HCT116 (cell line): ENCODE measurements at regions of chr1 and their contacts with region 1.

Region 1: GRCh38 chr1:160193091-160193819 is 2.9 kb downstream of the CASQ1 start:
- DNase-seq: peak; percentile 68
- ATAC-seq: peak; percentile 94
- H3K4me3 ChIP-seq: no peak overlapping the region
- H3K27ac ChIP-seq: no peak overlapping the region
- H3K4me1 ChIP-seq: peaks cover 3 to 4% of the 10 kb centered on the region in 2 experiments; a peak in 2 of 4 replicates
- H3K27me3 ChIP-seq: no peaks in the 10 kb centered on the region
- CTCF ChIP-seq: peak; percentile 92 to 97 (median 96)
- POLR2A ChIP-seq: no peak
- RAD21 ChIP-seq: peak; percentile 96

Region 2: DNA sequence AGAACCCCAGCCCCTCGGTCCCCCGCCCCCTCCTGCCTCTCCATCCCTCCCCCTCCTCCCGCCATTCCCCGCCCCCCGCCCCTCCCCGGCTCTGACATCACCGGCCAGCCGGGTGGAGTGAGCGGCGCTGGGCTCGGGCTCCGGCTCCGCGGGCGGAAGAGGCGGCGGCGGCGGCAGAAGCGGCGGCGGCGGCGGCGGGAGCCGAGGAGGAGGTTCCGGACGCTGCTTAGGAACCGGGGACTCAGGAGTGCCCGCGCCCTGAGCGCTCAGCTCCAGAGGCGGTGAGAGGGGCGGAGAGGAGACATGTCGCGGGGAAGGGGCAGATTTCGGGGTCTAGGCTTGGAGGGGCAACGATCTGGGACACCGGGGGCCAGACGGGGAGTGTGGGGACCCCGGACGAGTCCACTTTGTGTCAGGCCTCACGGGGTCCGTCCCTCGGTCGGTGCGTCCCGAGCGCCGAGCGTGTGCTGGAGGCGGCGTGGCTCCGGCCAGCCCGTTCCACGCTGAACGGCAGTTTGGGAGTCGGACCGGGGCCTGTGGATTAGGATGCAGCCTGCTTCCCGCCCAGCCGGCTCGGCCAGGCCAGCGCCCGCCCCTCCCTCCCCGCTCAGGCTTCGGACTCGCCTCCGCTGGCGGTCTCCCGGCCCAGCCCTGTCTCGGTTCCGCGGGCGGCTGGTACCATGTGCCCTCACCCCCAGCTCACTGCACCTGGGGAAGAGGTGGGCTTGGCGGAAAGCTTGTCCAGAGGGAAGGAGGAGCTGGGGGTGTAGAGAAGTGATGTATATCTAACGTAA is 12.2 kb after region 1 on chr1 and contains the start of gene PEA15:
- CTCF ChIA-PET with region 1: interaction called, 17 read pairs
- POLR2A ChIA-PET with region 1: interaction called, 3 read pairs
- RAD21 ChIA-PET with region 1: no interaction called
- intact Hi-C with region 1: no loop called
- DNase-seq: peak; percentile 12
- ATAC-seq: peak; percentile 80
- H3K4me3 ChIP-seq: peak within 1 kb of the TSS; percentile 78 to 89
- H3K27ac ChIP-seq: peak within 1 kb of the TSS; percentile 78
- H3K4me1 ChIP-seq: peaks cover 12 to 20% of the 10 kb centered on the region in 2 experiments; a peak in 3 of 4 replicates
- H3K27me3 ChIP-seq: no peaks in the 10 kb centered on the region
- CTCF ChIP-seq: no peak
- POLR2A ChIP-seq: peak; percentile 24
- RAD21 ChIP-seq: no peak
- total RNA-seq, gene PEA15: 44.0 TPM

Region 3: GRCh38 chr1:160244209-160244608 is 51.0 kb after region 1 on chr1:
- CTCF ChIA-PET with region 1: interaction called, 11 read pairs
- POLR2A ChIA-PET with region 1: no interaction called
- RAD21 ChIA-PET with region 1: interaction called in 1 of 2 experiments, 3 read pairs
- intact Hi-C with region 1: no loop called
- DNase-seq: no peak
- ATAC-seq: no peak
- H3K4me3 ChIP-seq: no peak overlapping the region
- H3K27ac ChIP-seq: no peak overlapping the region
- H3K4me1 ChIP-seq: no peaks in the 10 kb centered on the region
- H3K27me3 ChIP-seq: no peaks in the 10 kb centered on the region
- CTCF ChIP-seq: no peak
- POLR2A ChIP-seq: no peak
- RAD21 ChIP-seq: no peak

Region 4: DNA sequence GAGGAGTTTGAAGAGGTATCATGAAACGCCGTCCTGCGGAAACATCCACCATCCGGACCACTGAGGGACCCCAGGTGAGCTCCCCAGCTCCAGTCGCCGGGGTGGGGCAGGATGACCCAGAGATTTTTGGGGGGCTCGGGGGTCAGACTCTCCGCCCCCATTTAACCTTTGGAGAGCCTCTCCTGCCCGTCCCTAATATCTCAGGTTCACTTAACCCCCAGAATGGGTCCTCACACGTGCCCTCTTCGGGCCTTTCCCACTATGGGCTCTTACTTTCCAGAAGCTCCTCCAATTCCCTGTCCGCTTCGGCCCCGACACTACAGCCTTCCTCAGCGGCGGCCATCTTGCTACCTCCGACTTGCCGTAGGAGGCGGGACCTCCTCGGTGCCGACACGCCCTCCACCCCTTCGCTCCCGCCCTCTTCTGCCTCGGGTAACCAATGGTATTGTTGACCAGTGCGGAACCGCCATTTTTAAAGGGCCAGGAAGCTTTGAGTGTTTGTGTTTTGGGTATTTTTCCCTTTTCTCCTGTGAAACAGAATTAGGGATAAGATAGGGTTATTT is 91.6 kb after region 1 on chr1 and contains the start of gene PEX19:
- CTCF ChIA-PET with region 1: interaction called, 17 read pairs
- POLR2A ChIA-PET with region 1: no interaction called
- RAD21 ChIA-PET with region 1: no interaction called
- intact Hi-C with region 1: no loop called
- DNase-seq: peak; percentile 84
- ATAC-seq: peak; percentile 97
- H3K4me3 ChIP-seq: peak within 1 kb of the TSS; percentile 91 to 99
- H3K27ac ChIP-seq: peak within 1 kb of the TSS; percentile 68
- H3K4me1 ChIP-seq: peaks cover 6 to 13% of the 10 kb centered on the region in 2 experiments; a peak in 3 of 4 replicates
- H3K27me3 ChIP-seq: no peaks in the 10 kb centered on the region
- CTCF ChIP-seq: no peak
- POLR2A ChIP-seq: peak; percentile 82
- RAD21 ChIP-seq: no peak
- total RNA-seq, gene PEX19: 35.9 TPM

Region 5: DNA sequence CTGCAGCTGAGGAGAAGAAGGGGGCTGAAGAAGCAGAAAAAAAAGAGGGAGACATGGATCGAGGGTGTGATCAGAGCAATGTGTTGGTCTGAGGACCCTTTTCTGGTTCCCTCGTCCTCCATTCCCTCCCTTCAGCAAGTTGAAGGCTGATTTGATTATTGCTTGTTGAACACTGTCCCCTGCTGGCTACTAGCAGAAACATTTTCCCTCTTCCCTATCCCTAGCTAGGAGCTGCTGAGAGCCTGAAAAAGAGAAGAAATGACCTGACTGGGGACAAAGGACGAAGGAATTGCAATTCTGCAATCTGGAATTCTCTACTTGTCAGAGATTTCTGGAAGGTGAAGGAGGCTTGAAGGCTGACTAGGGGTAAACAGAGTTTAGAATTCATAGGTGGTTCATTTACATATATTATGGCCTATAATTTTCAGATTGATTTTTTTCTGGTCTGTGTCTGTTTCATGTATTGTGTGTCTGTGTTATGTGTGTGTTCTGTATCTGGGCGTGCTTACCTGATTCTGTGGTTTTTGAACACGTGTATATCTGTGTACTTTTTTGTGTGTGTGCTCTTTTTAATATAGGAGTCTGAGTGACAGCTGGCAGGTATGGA is 183.4 kb after region 1 on chr1:
- CTCF ChIA-PET with region 1: interaction called, 26 read pairs
- POLR2A ChIA-PET with region 1: no interaction called
- RAD21 ChIA-PET with region 1: interaction called, 5 to 8 read pairs
- intact Hi-C with region 1: loop called (anchors 5 kb)
- DNase-seq: peak; percentile 61
- ATAC-seq: peak; percentile 92
- H3K4me3 ChIP-seq: no peak overlapping the region
- H3K27ac ChIP-seq: no peak overlapping the region
- H3K4me1 ChIP-seq: peaks cover 0 to 8% of the 10 kb centered on the region in 2 experiments; a peak in 1 of 4 replicates
- H3K27me3 ChIP-seq: no peaks in the 10 kb centered on the region
- CTCF ChIP-seq: peak; percentile 89 to 96 (median 92)
- POLR2A ChIP-seq: no peak
- RAD21 ChIP-seq: peak; percentile 96

Region 6: GRCh38 chr1:160460683-160461287 is 267.5 kb after region 1 on chr1:
- CTCF ChIA-PET with region 1: no interaction called
- POLR2A ChIA-PET with region 1: no interaction called
- RAD21 ChIA-PET with region 1: no interaction called
- intact Hi-C with region 1: no loop called
- DNase-seq: no peak
- ATAC-seq: no peak
- H3K4me3 ChIP-seq: no peak overlapping the region
- H3K27ac ChIP-seq: no peak overlapping the region
- H3K4me1 ChIP-seq: peaks cover 2 to 7% of the 10 kb centered on the region in 2 experiments; a peak in 1 of 4 replicates
- H3K27me3 ChIP-seq: no peaks in the 10 kb centered on the region
- CTCF ChIP-seq: no peak
- POLR2A ChIP-seq: no peak
- RAD21 ChIP-seq: no peak